Naive thymus-derived CD4-positive, alpha-beta T cell (primary cell): ENCODE measurements at regions of chr3 and their contacts with region 1.

Region 1: GRCh38 chr3:108090701-108091451 is at the start of gene CD47:
- DNase-seq: peak; percentile 94 to 98 (median 98)
- ATAC-seq: peak; percentile 85
- H3K4me3 ChIP-seq: peak within 1 kb of the TSS; percentile 92
- H3K4me3 Mint-ChIP-seq: peak within 1 kb of the TSS in 8 of 10 donors; percentile 85 to 100 (median 98)
- H3K27ac ChIP-seq: peak within 1 kb of the TSS; percentile 100
- H3K27ac Mint-ChIP-seq: peak within 1 kb of the TSS; percentile 94 to 100 (median 99)
- H3K4me1 ChIP-seq: peaks cover 43 to 50% of the 10 kb centered on the region in 2 donors
- H3K4me1 Mint-ChIP-seq: peaks cover 33 to 56% (median 41%) of the 10 kb centered on the region in 7 donors
- H3K27me3 ChIP-seq: no peaks in the 10 kb centered on the region
- H3K27me3 Mint-ChIP-seq: peaks cover 0 to 10% (median 0%) of the 10 kb centered on the region in 5 donors
- total RNA-seq, gene CD47: 130 to 232 (median 136) TPM

Region 2: GRCh38 chr3:107927361-107928083 is 163.4 kb before region 1 on chr3:
- CTCF ChIA-PET with region 1: interaction called, 3 read pairs
- POLR2A ChIA-PET with region 1: no interaction called
- intact Hi-C with region 1: loop called in 1 of 2 experiments (anchors 2 kb)
- DNase-seq: peak; percentile 39 to 71 (median 57)
- ATAC-seq: peak; percentile 92
- H3K4me3 ChIP-seq: peak overlapping the region; percentile 60
- H3K4me3 Mint-ChIP-seq: peak overlapping the region; percentile 86 to 93 (median 89)
- H3K27ac ChIP-seq: no peak overlapping the region
- H3K27ac Mint-ChIP-seq: peak overlapping the region in 5 of 9 donors; percentile 26 to 88 (median 64)
- H3K4me1 ChIP-seq: peaks cover 5 to 6% of the 10 kb centered on the region in 2 donors
- H3K4me1 Mint-ChIP-seq: peaks cover 9 to 15% (median 13%) of the 10 kb centered on the region in 7 donors
- H3K27me3 ChIP-seq: peaks cover 0 to under 1% of the 10 kb centered on the region in 2 donors
- H3K27me3 Mint-ChIP-seq: peaks cover 0 to 17% (median 4%) of the 10 kb centered on the region in 5 donors

Region 3: DNA sequence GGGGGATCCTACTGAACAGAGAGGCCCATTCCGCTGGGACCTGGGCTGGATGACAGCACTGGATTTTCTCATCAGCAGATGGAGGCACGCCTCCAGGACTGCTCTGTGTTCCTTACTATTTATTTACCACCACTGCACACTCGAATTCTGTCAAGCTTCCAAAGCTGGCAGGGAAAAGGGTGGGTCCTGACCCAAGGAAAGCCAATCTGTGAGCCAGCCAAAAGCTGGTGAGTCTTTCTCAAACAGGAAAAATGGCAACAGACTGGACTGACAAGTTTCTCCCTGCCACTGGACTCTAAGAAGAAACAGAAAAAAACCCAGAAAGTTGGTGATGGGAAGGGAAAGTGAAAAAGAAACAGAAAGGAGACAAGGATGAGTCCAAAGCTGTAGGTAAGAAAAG is 37.8 kb before region 1 on chr3:
- CTCF ChIA-PET with region 1: no interaction called
- POLR2A ChIA-PET with region 1: interaction called, 5 read pairs
- intact Hi-C with region 1: loop called in 1 of 2 experiments (anchors 5 kb)
- DNase-seq: no peak
- ATAC-seq: no peak
- H3K4me3 ChIP-seq: no peak overlapping the region
- H3K4me3 Mint-ChIP-seq: no peak overlapping the region
- H3K27ac ChIP-seq: no peak overlapping the region
- H3K27ac Mint-ChIP-seq: peak overlapping the region in 7 of 9 donors; percentile 10 to 82 (median 77)
- H3K4me1 ChIP-seq: peaks cover 4 to 8% of the 10 kb centered on the region in 2 donors
- H3K4me1 Mint-ChIP-seq: peaks cover 31 to 68% (median 49%) of the 10 kb centered on the region in 7 donors
- H3K27me3 ChIP-seq: no peaks in the 10 kb centered on the region
- H3K27me3 Mint-ChIP-seq: no peaks in the 10 kb centered on the region

Region 4: DNA sequence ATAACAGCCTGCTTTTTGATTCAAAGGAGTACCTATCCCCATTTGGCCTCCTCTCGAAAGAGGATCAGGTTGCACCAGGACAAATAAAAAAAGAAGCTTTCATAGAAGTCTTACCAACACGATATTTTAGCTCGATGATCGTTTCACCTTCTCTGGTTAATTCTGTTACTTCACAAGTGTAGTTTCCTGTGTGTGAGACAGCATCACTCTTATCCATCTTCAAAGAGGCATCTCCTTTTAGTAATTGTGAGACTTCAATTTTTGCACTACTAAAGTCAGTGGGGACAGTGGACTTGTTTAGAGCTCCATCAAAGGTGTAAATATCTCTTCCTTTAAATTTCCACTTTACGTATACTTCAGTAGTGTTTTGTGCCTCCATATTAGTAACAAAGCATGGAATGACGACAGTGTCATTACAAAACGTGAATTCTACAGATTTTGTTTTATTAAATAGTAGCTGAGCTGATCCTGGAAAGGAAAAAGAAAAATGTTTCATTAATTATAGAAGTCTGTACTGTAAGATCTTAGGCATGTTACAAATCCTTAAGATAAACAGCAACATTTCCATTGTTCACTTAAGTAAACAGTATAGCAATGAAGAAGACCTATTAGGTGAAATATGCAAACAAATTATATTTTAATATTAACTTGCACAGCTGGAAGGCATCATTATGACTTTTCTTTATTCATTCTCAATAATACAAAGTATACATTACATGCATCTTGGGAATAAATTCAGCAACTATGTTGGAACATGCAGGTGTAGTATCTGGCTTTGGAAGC is 10.8 kb before region 1 on chr3:
- CTCF ChIA-PET with region 1: interaction called, 3 read pairs
- POLR2A ChIA-PET with region 1: interaction called, 7 read pairs
- intact Hi-C with region 1: loop called (anchors 1 kb)
- DNase-seq: peak in 2 of 9 donors; percentile 18 to 22
- ATAC-seq: peak; percentile 62
- H3K4me3 ChIP-seq: no peak overlapping the region
- H3K4me3 Mint-ChIP-seq: peak overlapping the region in 8 of 10 donors; percentile 9 to 63 (median 56)
- H3K27ac ChIP-seq: peak overlapping the region; percentile 12
- H3K27ac Mint-ChIP-seq: peak overlapping the region; percentile 5 to 85 (median 59)
- H3K4me1 ChIP-seq: peaks cover 66 to 75% of the 10 kb centered on the region in 2 donors
- H3K4me1 Mint-ChIP-seq: peaks cover 9 to 57% (median 46%) of the 10 kb centered on the region in 7 donors
- H3K27me3 ChIP-seq: no peaks in the 10 kb centered on the region
- H3K27me3 Mint-ChIP-seq: no peaks in the 10 kb centered on the region

Region 5: GRCh38 chr3:108124337-108125152 is 33.7 kb after region 1 on chr3:
- CTCF ChIA-PET with region 1: interaction called, 13 read pairs
- POLR2A ChIA-PET with region 1: interaction called, 393 read pairs
- intact Hi-C with region 1: loop called (anchors 1 kb)
- DNase-seq: peak; percentile 33 to 88 (median 74)
- ATAC-seq: peak; percentile 79
- H3K4me3 ChIP-seq: peak overlapping the region; percentile 66
- H3K4me3 Mint-ChIP-seq: peak overlapping the region; percentile 82 to 98 (median 90)
- H3K27ac ChIP-seq: peak overlapping the region; percentile 89
- H3K27ac Mint-ChIP-seq: peak overlapping the region; percentile 92 to 99 (median 97)
- H3K4me1 ChIP-seq: peaks cover 48 to 56% of the 10 kb centered on the region in 2 donors
- H3K4me1 Mint-ChIP-seq: peaks cover 52 to 92% (median 68%) of the 10 kb centered on the region in 7 donors
- H3K27me3 ChIP-seq: no peaks in the 10 kb centered on the region
- H3K27me3 Mint-ChIP-seq: peaks cover 0 to 2% (median 0%) of the 10 kb centered on the region in 5 donors

Region 6: DNA sequence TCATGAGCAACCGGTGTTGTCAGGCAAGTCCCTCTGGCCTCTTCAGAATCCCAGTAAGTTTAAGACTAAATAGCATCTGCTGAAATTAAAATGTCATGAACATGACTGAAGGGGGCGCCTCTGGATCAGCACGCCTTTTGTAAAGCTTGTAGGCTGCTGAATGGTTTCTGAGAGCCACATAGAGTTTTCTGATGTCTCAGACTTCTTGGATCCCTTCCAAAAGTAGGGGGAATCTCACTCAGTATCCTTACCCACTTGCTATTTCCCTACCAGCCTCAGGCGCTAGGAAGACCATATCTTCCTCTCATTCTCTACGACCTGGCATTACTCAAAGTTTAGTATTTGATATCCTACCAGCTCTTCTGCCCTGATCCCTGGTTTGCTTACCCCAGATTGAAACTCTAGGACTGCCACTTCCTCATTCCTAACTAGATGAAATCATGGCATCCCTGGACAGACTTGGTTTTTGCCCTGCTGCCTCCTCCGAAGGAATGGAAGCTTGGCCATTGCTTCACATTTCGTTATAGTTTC is 62.6 kb after region 1 on chr3:
- CTCF ChIA-PET with region 1: no interaction called
- POLR2A ChIA-PET with region 1: no interaction called
- intact Hi-C with region 1: no loop called
- DNase-seq: peak in 8 of 9 donors; percentile 36 to 64 (median 45)
- ATAC-seq: peak; percentile 73
- H3K4me3 ChIP-seq: no peak overlapping the region
- H3K4me3 Mint-ChIP-seq: no peak overlapping the region
- H3K27ac ChIP-seq: no peak overlapping the region
- H3K27ac Mint-ChIP-seq: peak overlapping the region in 1 of 9 donors; percentile 25
- H3K4me1 ChIP-seq: peaks cover 0 to 4% of the 10 kb centered on the region in 2 donors
- H3K4me1 Mint-ChIP-seq: peaks cover 0 to 21% (median 13%) of the 10 kb centered on the region in 7 donors
- H3K27me3 ChIP-seq: no peaks in the 10 kb centered on the region
- H3K27me3 Mint-ChIP-seq: no peaks in the 10 kb centered on the region

Region 7: GRCh38 chr3:108328821-108329486 is 238.1 kb after region 1 on chr3:
- CTCF ChIA-PET with region 1: no interaction called
- POLR2A ChIA-PET with region 1: no interaction called
- intact Hi-C with region 1: no loop called
- DNase-seq: no peak
- ATAC-seq: no peak
- H3K4me3 ChIP-seq: no peak overlapping the region
- H3K4me3 Mint-ChIP-seq: peak overlapping the region in 1 of 10 donors; percentile 61
- H3K27ac ChIP-seq: no peak overlapping the region
- H3K27ac Mint-ChIP-seq: peak overlapping the region in 2 of 9 donors; percentile 34 to 76
- H3K4me1 ChIP-seq: peaks cover 0 to 6% of the 10 kb centered on the region in 2 donors
- H3K4me1 Mint-ChIP-seq: peaks cover 5 to 50% (median 13%) of the 10 kb centered on the region in 7 donors
- H3K27me3 ChIP-seq: no peaks in the 10 kb centered on the region
- H3K27me3 Mint-ChIP-seq: no peaks in the 10 kb centered on the region

Region 8: DNA sequence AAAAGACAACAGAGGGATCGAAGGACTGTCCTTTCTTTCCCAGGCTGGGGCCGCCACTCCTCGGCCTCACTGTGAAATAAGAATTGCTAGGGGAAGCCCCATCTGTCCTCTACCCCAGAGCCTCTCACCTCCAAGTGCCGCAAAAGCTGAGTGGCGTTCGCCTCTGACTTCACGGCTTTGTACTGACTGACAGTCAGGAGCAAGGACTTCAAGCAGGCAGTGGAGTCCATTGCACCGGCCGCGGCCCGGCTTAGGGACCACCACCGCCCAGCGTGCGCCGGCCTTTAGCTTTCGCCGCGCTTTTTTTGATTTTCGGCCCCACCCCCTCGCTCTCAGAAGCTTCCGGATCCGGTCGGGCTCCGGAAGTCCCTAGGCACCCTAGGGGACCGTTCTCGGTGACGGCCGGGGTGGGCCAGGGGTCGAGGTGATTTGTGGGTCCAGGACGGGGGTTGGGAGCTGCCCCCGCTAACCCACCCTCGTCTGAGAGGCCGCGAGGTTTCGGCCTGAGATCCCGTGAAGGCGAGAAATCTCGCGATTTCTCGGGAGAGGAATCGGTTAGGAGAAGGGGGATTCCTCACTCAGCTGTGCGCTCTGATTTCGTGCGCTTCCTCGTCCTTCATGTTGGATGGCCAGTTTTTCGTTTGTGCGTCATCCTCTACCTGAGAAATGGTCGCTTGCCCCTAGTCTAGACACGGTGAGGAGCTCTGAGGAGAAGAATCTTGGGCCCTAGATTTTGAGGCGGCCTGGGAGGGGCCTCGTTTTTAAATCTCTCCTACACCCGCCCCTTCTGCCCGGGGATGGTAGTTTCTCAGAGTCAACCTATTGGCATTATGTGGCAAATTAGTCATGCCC is 498.5 kb after region 1 on chr3 and contains the starts of genes CIP2A and DZIP3:
- CTCF ChIA-PET with region 1: no interaction called
- POLR2A ChIA-PET with region 1: no interaction called
- intact Hi-C with region 1: loop called (anchors 1 to 5 kb)
- DNase-seq: peak; percentile 74 to 88 (median 82)
- ATAC-seq: peak; percentile 83
- H3K4me3 ChIP-seq: peak within 1 kb of the TSS; percentile 87
- H3K4me3 Mint-ChIP-seq: peak within 1 kb of the TSS; percentile 94 to 99 (median 98)
- H3K27ac ChIP-seq: peak within 1 kb of the TSS; percentile 92
- H3K27ac Mint-ChIP-seq: peak within 1 kb of the TSS; percentile 95 to 100 (median 99)
- H3K4me1 ChIP-seq: peaks cover 11 to 15% of the 10 kb centered on the region in 2 donors
- H3K4me1 Mint-ChIP-seq: peaks cover 12 to 53% (median 39%) of the 10 kb centered on the region in 7 donors
- H3K27me3 ChIP-seq: no peaks in the 10 kb centered on the region
- H3K27me3 Mint-ChIP-seq: no peaks in the 10 kb centered on the region
- total RNA-seq, gene CIP2A: 3.4 to 44.2 (median 4.1) TPM
- total RNA-seq, gene DZIP3: 9.6 to 17.3 (median 14.6) TPM